ENCODE measurements at regions of chr18 and their contacts with region 1.

Region 1: DNA sequence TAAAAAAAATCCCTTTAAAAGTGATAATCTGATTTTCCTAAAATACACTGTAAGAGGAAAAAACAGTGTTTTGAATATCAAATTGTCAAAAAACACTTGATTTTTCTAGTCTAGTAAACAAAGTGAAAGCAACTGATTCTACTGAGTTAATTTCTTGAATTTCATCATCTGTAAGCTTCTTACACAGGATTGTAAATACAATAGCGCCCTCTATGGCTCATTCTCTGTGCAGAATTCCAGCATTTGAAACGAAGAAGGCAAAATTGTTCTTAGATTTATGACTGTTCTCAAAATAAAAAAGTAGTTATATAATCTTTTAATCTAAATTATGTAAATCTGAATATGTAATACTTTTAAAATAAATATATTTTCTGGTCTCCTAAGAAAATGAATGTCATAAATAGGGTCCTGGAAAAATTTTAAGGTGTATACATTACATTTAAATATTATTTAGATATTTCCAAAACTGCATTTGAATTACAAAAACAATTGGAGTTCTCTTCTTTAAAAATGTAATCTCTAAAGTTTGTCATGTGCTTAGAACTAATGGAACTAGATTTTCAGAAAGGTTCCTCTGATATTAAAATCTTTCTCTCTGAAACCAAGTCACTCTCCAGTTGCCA is 176.9 kb upstream of the MC4R start:
- DNase-seq: peak; percentile 52
- ATAC-seq: no peak
- H3K4me3 ChIP-seq: no peak overlapping the region
- H3K4me3 Mint-ChIP-seq: no peak overlapping the region
- H3K27ac ChIP-seq: no peak overlapping the region
- H3K27ac Mint-ChIP-seq: no peak overlapping the region
- H3K4me1 ChIP-seq: no peaks in the 10 kb centered on the region
- H3K4me1 Mint-ChIP-seq: no peaks in the 10 kb centered on the region
- H3K27me3 ChIP-seq: no peaks in the 10 kb centered on the region
- H3K27me3 Mint-ChIP-seq: no peaks in the 10 kb centered on the region
- CTCF ChIP-seq: peak; percentile 86

Region 2: GRCh38 chr18:59249205-59249774 is 1300.2 kb before region 1 on chr18:
- CTCF ChIA-PET with region 1: interaction called, 3 read pairs
- POLR2A ChIA-PET with region 1: no interaction called
- intact Hi-C with region 1: loop called (anchors 5 kb)
- DNase-seq: peak; percentile 45
- ATAC-seq: no peak
- H3K4me3 ChIP-seq: no peak overlapping the region
- H3K4me3 Mint-ChIP-seq: no peak overlapping the region
- H3K27ac ChIP-seq: no peak overlapping the region
- H3K27ac Mint-ChIP-seq: no peak overlapping the region
- H3K4me1 ChIP-seq: no peaks in the 10 kb centered on the region
- H3K4me1 Mint-ChIP-seq: no peaks in the 10 kb centered on the region
- H3K27me3 ChIP-seq: peaks cover 0 to 14% (median 6%) of the 10 kb centered on the region in 4 experiments
- H3K27me3 Mint-ChIP-seq: peaks cover 49% of the 10 kb centered on the region
- CTCF ChIP-seq: peak; percentile 65

Region 3: DNA sequence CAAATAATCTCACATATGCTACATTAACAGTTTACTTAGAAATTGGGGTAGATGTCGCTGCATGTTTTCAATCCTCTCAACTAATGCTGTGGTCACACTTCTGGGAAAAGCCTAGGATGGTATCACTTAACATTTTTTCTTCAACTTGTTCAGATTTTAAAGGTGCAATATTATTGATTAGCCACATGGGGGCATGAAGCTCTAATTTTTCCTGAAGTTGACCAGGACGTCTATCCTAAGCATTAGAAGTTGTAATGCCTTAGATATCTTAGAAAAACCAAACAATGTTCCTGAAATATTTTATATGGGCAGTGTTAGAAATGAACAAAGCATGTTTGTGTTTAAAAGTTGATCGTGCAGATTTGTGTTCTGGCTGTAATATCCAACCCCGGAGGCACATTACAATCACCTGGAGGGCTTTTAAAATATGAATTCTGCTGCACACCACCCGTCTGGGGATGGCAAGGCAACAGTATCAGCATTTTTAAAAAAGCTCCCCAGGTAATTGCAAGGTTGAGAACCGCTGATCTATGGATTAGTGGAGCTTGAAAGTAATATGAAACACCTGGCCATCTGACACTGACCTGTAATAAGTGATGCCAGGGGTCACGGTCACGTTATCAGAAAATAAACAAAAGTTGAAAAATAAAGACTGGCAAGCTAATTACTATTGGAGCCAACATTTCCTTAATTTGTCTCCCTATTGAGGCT is 1089.9 kb before region 1 on chr18:
- CTCF ChIA-PET with region 1: interaction called, 88 read pairs
- POLR2A ChIA-PET with region 1: no interaction called
- intact Hi-C with region 1: no loop called
- DNase-seq: peak; percentile 12
- ATAC-seq: no peak
- H3K4me3 ChIP-seq: no peak overlapping the region
- H3K4me3 Mint-ChIP-seq: no peak overlapping the region
- H3K27ac ChIP-seq: no peak overlapping the region
- H3K27ac Mint-ChIP-seq: no peak overlapping the region
- H3K4me1 ChIP-seq: no peaks in the 10 kb centered on the region
- H3K4me1 Mint-ChIP-seq: no peaks in the 10 kb centered on the region
- H3K27me3 ChIP-seq: peaks cover 0 to 4% (median 2%) of the 10 kb centered on the region in 4 experiments
- H3K27me3 Mint-ChIP-seq: peaks cover 9% of the 10 kb centered on the region
- CTCF ChIP-seq: peak; percentile 80

Region 4: GRCh38 chr18:59783138-59783537 is 766.3 kb before region 1 on chr18:
- CTCF ChIA-PET with region 1: interaction called, 19 read pairs
- POLR2A ChIA-PET with region 1: no interaction called
- intact Hi-C with region 1: no loop called
- DNase-seq: peak; percentile 31
- ATAC-seq: no peak
- H3K4me3 ChIP-seq: no peak overlapping the region
- H3K4me3 Mint-ChIP-seq: no peak overlapping the region
- H3K27ac ChIP-seq: no peak overlapping the region
- H3K27ac Mint-ChIP-seq: no peak overlapping the region
- H3K4me1 ChIP-seq: no peaks in the 10 kb centered on the region
- H3K4me1 Mint-ChIP-seq: no peaks in the 10 kb centered on the region
- H3K27me3 ChIP-seq: no peaks in the 10 kb centered on the region
- H3K27me3 Mint-ChIP-seq: peaks cover 5% of the 10 kb centered on the region
- CTCF ChIP-seq: peak; percentile 58

Region 5: GRCh38 chr18:60560071-60560470 is 10.6 kb after region 1 on chr18:
- CTCF ChIA-PET with region 1: interaction called, 10 read pairs
- POLR2A ChIA-PET with region 1: no interaction called
- intact Hi-C with region 1: no loop called
- DNase-seq: no peak
- ATAC-seq: no peak
- H3K4me3 ChIP-seq: no peak overlapping the region
- H3K4me3 Mint-ChIP-seq: no peak overlapping the region
- H3K27ac ChIP-seq: no peak overlapping the region
- H3K27ac Mint-ChIP-seq: no peak overlapping the region
- H3K4me1 ChIP-seq: no peaks in the 10 kb centered on the region
- H3K4me1 Mint-ChIP-seq: no peaks in the 10 kb centered on the region
- H3K27me3 ChIP-seq: no peaks in the 10 kb centered on the region
- H3K27me3 Mint-ChIP-seq: no peaks in the 10 kb centered on the region
- CTCF ChIP-seq: no peak

Measured in B cell (primary cell).